Cardiac septum (tissue), 1 donor: ENCODE measurements at regions of chr3 and their contacts with region 1.

Region 1: GRCh38 chr3:40971191-40972168 is 227.8 kb upstream of the CTNNB1 start:
- DNase-seq: no peak

Region 2: GRCh38 chr3:40690749-40691451 is 280.6 kb before region 1 on chr3:
- intact Hi-C with region 1: loop called (anchors 2 kb)
- DNase-seq: peak; percentile 81

Region 3: GRCh38 chr3:40780291-40780924 is 191.1 kb before region 1 on chr3:
- intact Hi-C with region 1: loop called (anchors 1 kb)
- DNase-seq: peak; percentile 89

Region 4: DNA sequence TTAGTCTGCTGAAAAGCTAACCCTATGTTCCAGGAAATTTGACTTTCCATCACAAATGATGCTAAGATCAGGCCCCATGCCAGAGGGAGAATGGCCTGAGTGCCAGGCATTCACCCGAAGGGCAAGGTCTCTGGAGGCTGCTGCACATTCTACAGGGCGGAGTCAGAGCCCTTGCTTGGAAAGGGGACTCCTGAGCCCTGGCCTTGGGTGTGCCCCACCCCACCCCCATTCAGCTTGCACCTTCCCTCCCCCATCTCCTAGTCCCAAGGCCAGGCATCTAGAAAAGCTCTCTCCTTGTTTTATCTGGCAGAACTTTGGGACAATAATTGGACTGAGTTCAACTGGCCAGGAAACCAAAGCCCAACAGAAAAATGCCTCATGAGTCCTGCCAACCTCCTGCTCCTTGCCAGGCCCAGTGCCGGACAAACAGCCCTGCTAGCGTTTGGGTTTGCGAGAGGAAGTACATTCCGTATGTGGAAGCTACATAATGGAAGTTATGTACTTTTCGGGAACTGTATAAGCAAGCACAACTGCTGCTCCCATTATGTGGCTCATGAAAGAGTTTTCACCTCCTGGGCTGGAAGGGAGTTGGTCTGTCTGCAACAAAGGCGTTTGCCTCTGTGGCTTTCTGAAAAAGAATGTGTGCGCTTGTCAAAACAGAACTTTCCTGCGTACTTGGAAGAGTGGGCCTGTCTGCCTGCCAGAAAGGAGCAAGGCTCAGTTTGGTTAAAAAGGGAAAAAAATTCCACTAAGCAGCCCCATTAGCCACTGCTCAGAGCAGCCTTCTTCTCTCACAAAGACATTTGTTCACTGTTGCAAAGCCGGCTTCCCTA is 93.6 kb before region 1 on chr3:
- intact Hi-C with region 1: loop called (anchors 1 kb)
- DNase-seq: peak; percentile 82

Region 5: GRCh38 chr3:40901305-40901704 is 70.2 kb before region 1 on chr3:
- intact Hi-C with region 1: no loop called
- DNase-seq: no peak

Region 6: GRCh38 chr3:41117398-41117870 is 146.0 kb after region 1 on chr3:
- intact Hi-C with region 1: loop called (anchors 5 kb)
- DNase-seq: peak; percentile 94

Region 7: GRCh38 chr3:41198950-41199865 is 227.7 kb after region 1 on chr3 and contains the start of gene CTNNB1:
- intact Hi-C with region 1: loop called (anchors 1 kb)
- DNase-seq: peak; percentile 96
- total RNA-seq, gene CTNNB1: 171 TPM